ENCODE measurements at regions of chr12 and their contacts with region 1.

Region 1: DNA sequence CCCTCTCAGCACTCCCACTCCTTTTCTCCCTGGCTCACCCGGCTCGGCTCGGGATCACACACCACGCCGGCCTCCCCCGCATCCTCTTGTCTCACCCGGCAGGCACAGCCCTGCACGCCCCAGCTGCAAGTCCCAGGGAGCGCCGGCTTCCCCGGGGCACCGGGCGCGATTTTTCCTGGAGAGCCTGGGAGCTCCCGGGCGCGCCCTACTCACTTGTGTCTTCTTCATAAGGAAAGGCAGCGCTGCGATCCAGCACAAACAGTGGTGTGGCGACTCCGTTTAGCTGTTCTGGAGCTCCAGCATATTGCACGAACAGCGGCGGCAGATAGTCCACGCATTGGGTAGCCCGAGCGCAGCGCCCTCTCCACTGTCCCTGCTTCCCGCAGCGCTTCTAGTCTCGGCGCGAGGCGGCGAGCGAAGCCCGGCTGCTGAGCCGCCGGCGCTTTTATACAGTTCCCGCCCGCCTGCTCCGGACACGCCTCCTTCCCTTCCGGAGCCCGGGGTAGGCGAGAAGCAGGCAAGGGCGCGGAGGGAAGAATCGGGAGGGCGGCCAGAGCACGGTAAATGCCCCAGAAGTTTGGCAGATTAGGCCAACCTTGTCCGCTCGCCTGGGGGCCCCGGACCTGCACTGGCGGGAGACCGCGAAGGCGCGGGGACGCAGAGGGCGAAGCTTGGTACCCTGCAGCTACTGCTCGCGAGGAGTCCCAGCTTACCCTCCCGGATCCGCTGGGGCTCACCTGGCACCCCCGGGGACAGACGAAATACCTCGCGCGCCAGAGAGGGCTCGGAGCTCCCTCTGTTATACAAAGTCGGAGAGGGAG is at the start of gene KITLG:
- DNase-seq: peak; percentile 89
- H3K4me3 Mint-ChIP-seq: peak within 1 kb of the TSS; percentile 91
- H3K27ac Mint-ChIP-seq: peak within 1 kb of the TSS; percentile 30
- H3K4me1 Mint-ChIP-seq: peaks cover 28% of the 10 kb centered on the region
- H3K27me3 Mint-ChIP-seq: no peaks in the 10 kb centered on the region
- CTCF ChIP-seq: no peak
- total RNA-seq, gene KITLG: 29.9 and 34.5 TPM in 2 replicates

Region 2: GRCh38 chr12:88299567-88300101 is 280.6 kb before region 1 on chr12:
- CTCF ChIA-PET with region 1: no interaction called
- intact Hi-C with region 1: loop called (anchors 2 kb)
- DNase-seq: peak; percentile 58
- H3K4me3 Mint-ChIP-seq: peak overlapping the region; percentile 50
- H3K27ac Mint-ChIP-seq: peak overlapping the region; percentile 82
- H3K4me1 Mint-ChIP-seq: peaks cover 36% of the 10 kb centered on the region
- H3K27me3 Mint-ChIP-seq: no peaks in the 10 kb centered on the region
- CTCF ChIP-seq: no peak

Region 3: GRCh38 chr12:88570103-88570502 is 10.2 kb before region 1 on chr12:
- CTCF ChIA-PET with region 1: interaction called, 13 read pairs
- intact Hi-C with region 1: loop called (anchors 1 kb)
- DNase-seq: no peak
- H3K4me3 Mint-ChIP-seq: no peak overlapping the region
- H3K27ac Mint-ChIP-seq: peak overlapping the region; percentile 39
- H3K4me1 Mint-ChIP-seq: peaks cover 87% of the 10 kb centered on the region
- H3K27me3 Mint-ChIP-seq: no peaks in the 10 kb centered on the region
- CTCF ChIP-seq: no peak

Region 4: GRCh38 chr12:88684602-88685001 is 104.3 kb after region 1 on chr12:
- CTCF ChIA-PET with region 1: no interaction called
- intact Hi-C with region 1: no loop called
- DNase-seq: no peak
- H3K4me3 Mint-ChIP-seq: no peak overlapping the region
- H3K27ac Mint-ChIP-seq: no peak overlapping the region
- H3K4me1 Mint-ChIP-seq: peaks cover 12% of the 10 kb centered on the region
- H3K27me3 Mint-ChIP-seq: no peaks in the 10 kb centered on the region
- CTCF ChIP-seq: no peak

Region 5: GRCh38 chr12:88934163-88934747 is 354.0 kb after region 1 on chr12:
- CTCF ChIA-PET with region 1: interaction called, 3 read pairs
- intact Hi-C with region 1: loop called (anchors 5 kb)
- DNase-seq: peak; percentile 16
- H3K4me3 Mint-ChIP-seq: peak overlapping the region; percentile 8
- H3K27ac Mint-ChIP-seq: peak overlapping the region; percentile 71
- H3K4me1 Mint-ChIP-seq: peaks cover 57% of the 10 kb centered on the region
- H3K27me3 Mint-ChIP-seq: no peaks in the 10 kb centered on the region
- CTCF ChIP-seq: no peak